ENCODE measurements at regions of chrX and their contacts with region 1.

Region 1: DNA sequence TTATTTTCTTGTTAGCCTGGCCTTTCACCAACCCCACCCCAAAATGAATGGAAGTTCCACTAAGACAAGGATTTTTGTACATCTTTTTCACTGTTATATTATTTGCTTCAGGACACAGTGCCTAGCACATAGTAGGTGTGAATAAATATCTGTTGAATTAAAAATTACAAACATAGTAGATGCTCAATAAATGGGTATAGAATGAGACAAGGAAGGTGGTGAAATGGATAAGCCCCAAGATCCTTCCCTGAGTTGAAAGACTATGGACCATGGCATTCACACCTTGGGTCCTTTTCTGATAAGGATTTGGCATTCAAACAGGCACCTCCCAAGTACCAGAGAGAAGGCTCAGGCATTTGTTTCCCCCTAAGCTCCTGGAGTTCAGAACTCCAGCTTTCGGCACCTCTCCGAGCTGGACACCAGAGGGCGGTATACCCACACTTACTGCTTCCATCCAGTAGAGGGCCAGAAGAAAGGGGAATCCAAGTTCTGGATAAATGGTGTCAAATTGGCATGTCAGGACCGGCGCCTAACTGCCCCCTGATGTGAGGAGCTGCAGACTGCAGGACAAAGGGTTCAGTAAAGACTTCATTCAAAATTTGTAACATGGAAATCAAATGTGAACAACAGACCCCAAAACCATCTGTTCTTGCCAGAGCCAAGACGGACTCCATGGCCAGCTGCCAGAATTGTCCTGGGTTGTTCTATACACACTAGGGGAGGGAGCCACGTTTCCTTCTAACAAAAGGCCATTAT is 193.0 kb downstream of the GPC3 start:
- DNase-seq: peak; percentile 73
- H3K4me3 ChIP-seq: no peak overlapping the region
- H3K27ac ChIP-seq: no peak overlapping the region
- H3K4me1 ChIP-seq: no peaks in the 10 kb centered on the region
- H3K27me3 ChIP-seq: no peaks in the 10 kb centered on the region
- CTCF ChIP-seq: peak; percentile 94

Region 2: GRCh38 chrX:133838761-133839676 is 46.6 kb after region 1 on chrX:
- intact Hi-C with region 1: loop called (anchors 5 kb)
- DNase-seq: peak; percentile 50
- H3K4me3 ChIP-seq: no peak overlapping the region
- H3K27ac ChIP-seq: no peak overlapping the region
- H3K4me1 ChIP-seq: no peaks in the 10 kb centered on the region
- H3K27me3 ChIP-seq: no peaks in the 10 kb centered on the region
- CTCF ChIP-seq: peak; percentile 56

Region 3: DNA sequence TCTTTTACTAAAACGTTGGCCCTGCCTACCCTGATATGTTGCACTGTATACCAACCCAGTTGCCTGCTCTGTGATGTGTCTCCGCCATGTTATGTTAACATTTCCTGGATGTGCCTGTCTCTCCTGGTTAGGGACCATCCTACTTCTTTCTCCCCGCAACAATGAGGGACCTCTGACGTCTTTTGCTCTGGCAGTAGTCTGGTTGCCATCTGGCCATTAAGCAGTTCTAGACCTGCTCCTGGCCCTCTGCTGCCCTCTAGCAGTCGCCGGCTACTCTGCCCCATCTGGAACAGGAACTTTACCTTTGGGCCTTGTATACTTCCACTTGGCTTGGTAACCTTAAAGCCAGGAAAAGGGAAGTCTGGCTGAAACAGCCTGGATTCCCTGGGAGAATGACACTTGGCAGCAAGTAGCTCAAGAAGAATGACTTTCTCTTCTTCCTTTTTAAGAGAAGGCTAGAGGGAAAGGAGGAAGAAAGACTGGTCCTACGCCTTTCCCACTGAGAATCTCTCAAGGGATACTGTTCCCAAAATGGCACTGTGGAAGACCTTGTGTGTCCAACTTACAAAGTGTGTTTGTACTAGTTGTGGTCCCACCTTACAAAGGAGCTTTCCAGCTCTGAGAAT is 129.5 kb after region 1 on chrX:
- intact Hi-C with region 1: loop called (anchors 10 kb)
- DNase-seq: peak; percentile 62
- H3K4me3 ChIP-seq: no peak overlapping the region
- H3K27ac ChIP-seq: no peak overlapping the region
- H3K4me1 ChIP-seq: no peaks in the 10 kb centered on the region
- H3K27me3 ChIP-seq: no peaks in the 10 kb centered on the region
- CTCF ChIP-seq: peak; percentile 50

Measured in colonic mucosa (tissue), 4 donors.